H1 (cell line): ENCODE measurements at regions of chr11 and their contacts with region 1.

Region 1: GRCh38 chr11:88307749-88308425 is 29.6 kb downstream of the CTSC start:
- DNase-seq: peak in 1 of 2 experiments; percentile 53
- H3K4me3 ChIP-seq: peak overlapping the region in 3 of 4 experiments; percentile 1 to 49 (median 16); a peak in 5 of 8 replicates
- H3K27ac ChIP-seq: peak overlapping the region; percentile 80
- H3K4me1 ChIP-seq: peaks cover 2 to 24% (median 10%) of the 10 kb centered on the region in 4 experiments; a peak in 6 of 7 replicates
- H3K27me3 ChIP-seq: no peaks in the 10 kb centered on the region
- CTCF ChIP-seq: no peak
- EP300 ChIP-seq: peak in 1 of 2 experiments; percentile 51; a peak in 1 of 3 replicates
- POLR2A ChIP-seq: peak; percentile 69 to 84
- RAD21 ChIP-seq: peak; percentile 2 to 30; a peak in 2 of 4 replicates

Region 2: GRCh38 chr11:88103337-88104206 is 204.3 kb before region 1 on chr11:
- CTCF ChIA-PET with region 1: no interaction called
- POLR2A ChIA-PET with region 1: no interaction called
- DNase-seq: peak; percentile 63 to 65
- H3K4me3 ChIP-seq: no peak overlapping the region
- H3K27ac ChIP-seq: no peak overlapping the region
- H3K4me1 ChIP-seq: peaks cover 0 to 5% (median 0%) of the 10 kb centered on the region in 4 experiments; a peak in 2 of 7 replicates
- H3K27me3 ChIP-seq: no peaks in the 10 kb centered on the region
- CTCF ChIP-seq: peak; percentile 71 to 99 (median 95)
- EP300 ChIP-seq: no peak
- POLR2A ChIP-seq: no peak
- RAD21 ChIP-seq: peak; percentile 82 to 83

Region 3: GRCh38 chr11:88292171-88292843 is 15.6 kb before region 1 on chr11:
- CTCF ChIA-PET with region 1: interaction called, 4 read pairs
- POLR2A ChIA-PET with region 1: interaction called, 33 read pairs
- DNase-seq: no peak
- H3K4me3 ChIP-seq: no peak overlapping the region
- H3K27ac ChIP-seq: no peak overlapping the region
- H3K4me1 ChIP-seq: no peaks in the 10 kb centered on the region; a peak in 1 of 7 replicates
- H3K27me3 ChIP-seq: no peaks in the 10 kb centered on the region
- CTCF ChIP-seq: no peak
- EP300 ChIP-seq: no peak
- POLR2A ChIP-seq: no peak
- RAD21 ChIP-seq: no peak

Region 4: DNA sequence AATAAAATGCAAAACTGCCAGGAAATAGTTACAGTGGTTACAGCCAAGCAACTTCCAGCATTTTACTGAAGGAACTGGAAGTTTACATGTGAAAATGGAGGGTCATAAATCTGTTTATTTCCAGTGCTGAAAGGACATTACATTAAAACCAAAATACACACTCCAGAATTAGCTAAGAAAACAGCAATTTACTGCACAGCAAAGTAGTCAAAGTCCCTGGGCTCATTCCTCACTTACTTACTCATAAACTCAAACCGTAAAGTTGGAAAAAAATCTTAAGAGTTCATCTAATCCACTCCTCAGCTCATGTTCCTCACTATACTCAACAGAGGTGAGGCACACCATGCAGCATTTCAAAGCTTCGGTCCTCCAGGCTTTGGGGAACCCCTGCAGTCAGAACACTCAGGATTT is 12.3 kb after region 1 on chr11:
- CTCF ChIA-PET with region 1: no interaction called
- POLR2A ChIA-PET with region 1: interaction called, 28 read pairs
- DNase-seq: no peak
- H3K4me3 ChIP-seq: no peak overlapping the region
- H3K27ac ChIP-seq: no peak overlapping the region
- H3K4me1 ChIP-seq: peaks cover 0 to 9% (median 2%) of the 10 kb centered on the region in 4 experiments; a peak in 3 of 7 replicates
- H3K27me3 ChIP-seq: no peaks in the 10 kb centered on the region
- CTCF ChIP-seq: no peak
- EP300 ChIP-seq: no peak
- POLR2A ChIP-seq: no peak
- RAD21 ChIP-seq: no peak

Region 5: GRCh38 chr11:88327061-88327460 is 19.2 kb after region 1 on chr11:
- CTCF ChIA-PET with region 1: interaction called, 4 read pairs
- POLR2A ChIA-PET with region 1: interaction called, 33 read pairs
- DNase-seq: no peak
- H3K4me3 ChIP-seq: no peak overlapping the region
- H3K27ac ChIP-seq: no peak overlapping the region
- H3K4me1 ChIP-seq: peaks cover 4 to 13% (median 6%) of the 10 kb centered on the region in 4 experiments; a peak in 5 of 7 replicates
- H3K27me3 ChIP-seq: no peaks in the 10 kb centered on the region
- CTCF ChIP-seq: no peak
- EP300 ChIP-seq: no peak
- POLR2A ChIP-seq: no peak
- RAD21 ChIP-seq: no peak